SK-N-SH (cell line): ENCODE measurements at regions of chr3 and their contacts with region 1.

Region 1: GRCh38 chr3:134212906-134213665 is 37.6 kb downstream of the RYK start:
- DNase-seq: peak; percentile 58
- H3K4me3 ChIP-seq: no peak overlapping the region; a peak in 1 of 4 replicates
- H3K27ac ChIP-seq: no peak overlapping the region
- H3K4me1 ChIP-seq: no peaks in the 10 kb centered on the region; a peak in 1 of 4 replicates
- H3K27me3 ChIP-seq: no peaks in the 10 kb centered on the region
- CTCF ChIP-seq: peak; percentile 98
- EP300 ChIP-seq: no peak
- RAD21 ChIP-seq: peak; percentile 85

Region 2: DNA sequence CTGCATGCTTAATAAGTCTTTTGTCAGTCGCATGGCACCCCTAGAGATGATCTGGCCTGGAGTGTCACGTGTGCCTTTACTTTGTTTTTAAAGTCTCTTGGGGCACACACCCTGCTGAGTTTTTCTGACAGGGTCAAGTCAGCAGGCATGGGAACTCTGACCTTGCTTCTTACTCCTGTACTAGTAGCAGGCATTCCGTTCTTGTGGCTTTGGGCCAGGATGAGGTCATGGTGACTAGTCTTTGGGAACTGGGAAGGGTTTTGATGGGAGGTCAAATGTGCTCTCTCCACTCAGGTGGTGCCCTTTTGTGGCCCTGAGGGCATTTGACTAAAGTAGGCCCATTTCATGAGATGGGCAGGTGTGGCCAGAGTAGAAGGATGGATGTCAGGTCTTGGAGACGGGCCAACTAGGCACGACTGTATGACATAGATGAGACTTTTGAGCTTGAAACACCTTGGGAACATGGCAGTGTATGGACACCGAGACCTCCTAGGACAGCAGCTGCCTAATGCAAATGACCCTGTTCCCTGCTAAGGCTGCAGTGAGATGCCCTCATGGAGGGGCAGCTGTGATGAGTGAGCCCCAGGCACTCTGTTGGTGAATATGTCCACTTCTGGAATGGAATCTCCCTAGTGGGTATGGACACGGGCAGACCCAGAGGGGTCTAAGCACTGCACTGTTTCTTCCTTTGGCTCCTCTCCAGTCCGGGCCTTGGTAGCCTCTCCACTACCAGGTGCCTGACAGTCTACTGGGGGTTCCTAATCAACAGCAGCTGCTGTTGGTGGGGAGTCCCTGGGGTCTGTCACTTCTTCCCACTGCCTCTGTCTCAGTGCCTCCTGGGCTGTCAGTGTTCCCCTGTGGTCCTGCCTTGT is 391.1 kb before region 1 on chr3:
- CTCF ChIA-PET with region 1: interaction called, 24 read pairs
- POLR2A ChIA-PET with region 1: no interaction called
- DNase-seq: no peak
- H3K4me3 ChIP-seq: no peak overlapping the region
- H3K27ac ChIP-seq: no peak overlapping the region
- H3K4me1 ChIP-seq: no peaks in the 10 kb centered on the region
- H3K27me3 ChIP-seq: no peaks in the 10 kb centered on the region
- CTCF ChIP-seq: no peak
- EP300 ChIP-seq: no peak
- RAD21 ChIP-seq: no peak

Region 3: GRCh38 chr3:133938770-133939462 is 274.2 kb before region 1 on chr3:
- CTCF ChIA-PET with region 1: interaction called, 152 read pairs
- POLR2A ChIA-PET with region 1: no interaction called
- DNase-seq: no peak
- H3K4me3 ChIP-seq: no peak overlapping the region
- H3K27ac ChIP-seq: no peak overlapping the region
- H3K4me1 ChIP-seq: peaks cover 4 to 11% of the 10 kb centered on the region in 2 experiments; a peak in 2 of 4 replicates
- H3K27me3 ChIP-seq: 0 out of 2 replicates have a peak, but pooled peaks cover 4% of the 10 kb centered on the region
- CTCF ChIP-seq: no peak
- EP300 ChIP-seq: no peak
- RAD21 ChIP-seq: peak; percentile 49

Region 4: DNA sequence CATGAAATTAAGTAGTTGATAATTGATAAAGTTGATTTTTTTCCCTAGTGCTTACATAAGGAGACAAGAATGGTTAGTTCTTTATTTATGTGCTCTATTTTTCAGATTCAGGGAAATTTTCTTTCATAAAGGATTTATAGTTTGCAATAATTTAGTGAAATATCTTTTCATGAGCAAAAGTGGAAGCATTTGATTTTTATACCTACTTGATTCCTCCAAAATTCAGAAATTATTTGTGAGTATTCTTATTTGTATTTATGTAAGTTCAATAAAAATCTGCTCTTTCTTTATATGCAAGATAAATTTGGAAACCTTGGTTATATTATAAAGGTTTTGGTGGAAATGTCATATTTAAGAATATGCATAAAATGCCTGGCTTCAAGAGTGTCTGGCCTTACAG is 168.6 kb before region 1 on chr3:
- CTCF ChIA-PET with region 1: no interaction called
- POLR2A ChIA-PET with region 1: no interaction called
- DNase-seq: no peak
- H3K4me3 ChIP-seq: no peak overlapping the region
- H3K27ac ChIP-seq: no peak overlapping the region
- H3K4me1 ChIP-seq: no peaks in the 10 kb centered on the region
- H3K27me3 ChIP-seq: no peaks in the 10 kb centered on the region
- CTCF ChIP-seq: no peak
- EP300 ChIP-seq: no peak
- RAD21 ChIP-seq: no peak

Region 5: DNA sequence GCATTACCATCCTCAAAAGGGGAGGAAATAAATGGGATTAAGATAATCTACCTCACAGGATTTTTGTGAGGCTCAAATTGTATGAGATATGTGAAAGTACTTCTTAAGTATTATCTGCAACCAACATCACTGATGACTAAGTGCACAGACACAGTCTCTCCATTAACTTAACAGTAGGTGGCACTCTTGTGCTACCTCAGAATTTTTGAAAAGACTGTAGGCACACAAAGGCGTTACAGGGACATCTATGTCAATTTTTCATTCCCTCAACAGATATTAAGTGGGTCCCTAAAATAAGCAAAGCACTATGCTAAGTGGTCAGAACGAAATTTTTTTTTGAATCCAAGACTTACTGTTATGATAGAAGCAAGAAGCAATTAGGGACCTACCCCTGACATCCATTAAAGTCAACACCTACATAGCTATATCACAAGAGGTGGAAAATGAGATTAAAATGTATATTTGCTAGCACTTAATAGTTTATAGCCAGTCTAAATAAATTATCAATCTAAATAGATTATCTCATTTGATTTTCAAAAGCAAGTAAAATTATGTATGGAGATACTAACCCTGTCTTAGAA is 15.3 kb before region 1 on chr3:
- CTCF ChIA-PET with region 1: interaction called, 133 read pairs
- POLR2A ChIA-PET with region 1: no interaction called
- DNase-seq: peak; percentile 48
- H3K4me3 ChIP-seq: no peak overlapping the region; a peak in 1 of 4 replicates
- H3K27ac ChIP-seq: no peak overlapping the region
- H3K4me1 ChIP-seq: peaks cover 0 to 13% of the 10 kb centered on the region in 2 experiments; a peak in 1 of 4 replicates
- H3K27me3 ChIP-seq: no peaks in the 10 kb centered on the region
- CTCF ChIP-seq: peak; percentile 83
- EP300 ChIP-seq: no peak
- RAD21 ChIP-seq: peak; percentile 73

Region 6: DNA sequence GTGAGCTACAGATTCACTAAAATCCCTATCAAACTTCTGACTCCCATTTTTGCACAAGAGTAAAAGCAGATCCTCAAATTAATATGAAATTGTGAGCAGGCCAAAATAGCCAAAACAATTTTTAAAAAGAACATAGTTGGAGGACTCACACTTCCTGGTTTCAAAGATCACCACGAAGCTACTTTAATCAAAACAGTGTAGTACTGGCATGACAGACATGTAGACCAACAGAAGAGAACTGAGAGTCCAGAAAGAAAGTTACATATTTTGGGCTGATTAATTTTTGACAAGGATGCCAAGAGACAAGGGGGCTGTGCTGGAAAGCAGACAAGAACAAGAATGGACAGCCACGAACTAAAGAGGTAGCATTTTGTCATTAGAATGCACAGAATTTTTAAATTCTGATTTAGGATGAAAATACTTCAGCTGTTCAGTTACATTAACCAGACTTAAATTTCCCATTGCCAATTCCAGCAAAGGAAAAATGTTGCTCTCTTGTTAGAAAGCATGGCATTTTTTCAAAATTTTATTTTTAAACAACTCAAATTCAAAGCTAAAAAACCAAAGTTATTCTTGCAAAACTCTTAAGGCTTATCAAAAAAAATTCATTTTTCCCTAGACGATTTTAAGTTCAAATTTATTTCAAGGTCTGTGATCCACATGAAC is 23.6 kb after region 1 on chr3:
- CTCF ChIA-PET with region 1: interaction called, 25 read pairs
- POLR2A ChIA-PET with region 1: no interaction called
- DNase-seq: no peak
- H3K4me3 ChIP-seq: no peak overlapping the region
- H3K27ac ChIP-seq: peak overlapping the region in 1 of 2 experiments; percentile 34; a peak in 1 of 4 replicates
- H3K4me1 ChIP-seq: peaks cover 3% of the 10 kb centered on the region in 2 experiments; a peak in 2 of 4 replicates
- H3K27me3 ChIP-seq: no peaks in the 10 kb centered on the region
- CTCF ChIP-seq: no peak
- EP300 ChIP-seq: no peak
- RAD21 ChIP-seq: no peak

Region 7: GRCh38 chr3:134249296-134249841 is 36.3 kb after region 1 on chr3:
- CTCF ChIA-PET with region 1: interaction called, 25 read pairs
- POLR2A ChIA-PET with region 1: no interaction called
- DNase-seq: no peak
- H3K4me3 ChIP-seq: peak overlapping the region; percentile 80 to 82
- H3K27ac ChIP-seq: peak overlapping the region; percentile 73 to 90; a peak in 3 of 4 replicates
- H3K4me1 ChIP-seq: peaks cover 0 to 12% of the 10 kb centered on the region in 2 experiments; a peak in 2 of 4 replicates
- H3K27me3 ChIP-seq: no peaks in the 10 kb centered on the region
- CTCF ChIP-seq: peak; percentile 17; the same call in 1 of the 2 replicates
- EP300 ChIP-seq: no peak
- RAD21 ChIP-seq: no peak

Region 8: GRCh38 chr3:134308350-134308891 is 95.3 kb after region 1 on chr3:
- CTCF ChIA-PET with region 1: interaction called, 32 read pairs
- POLR2A ChIA-PET with region 1: no interaction called
- DNase-seq: peak; percentile 85
- H3K4me3 ChIP-seq: peak overlapping the region; percentile 3 to 16; a peak in 2 of 4 replicates
- H3K27ac ChIP-seq: peak overlapping the region; percentile 4 to 67; a peak in 3 of 4 replicates
- H3K4me1 ChIP-seq: peaks cover 0 to 24% of the 10 kb centered on the region in 2 experiments; a peak in 2 of 4 replicates
- H3K27me3 ChIP-seq: no peaks in the 10 kb centered on the region
- CTCF ChIP-seq: peak; percentile 99
- EP300 ChIP-seq: no peak
- RAD21 ChIP-seq: peak; percentile 100